HCT116 (cell line): ENCODE measurements at regions of chr12 and their contacts with region 1.

Region 1: GRCh38 chr12:55738123-55739024 is 4.5 kb upstream of the GDF11 start:
- DNase-seq: peak; percentile 82
- ATAC-seq: peak; percentile 79
- H3K4me3 ChIP-seq: peak overlapping the region; percentile 63 to 64
- H3K27ac ChIP-seq: peak overlapping the region; percentile 46
- H3K4me1 ChIP-seq: peaks cover 14 to 44% of the 10 kb centered on the region in 2 experiments
- H3K27me3 ChIP-seq: no peaks in the 10 kb centered on the region
- CTCF ChIP-seq: peak; percentile 65 to 93 (median 87)
- POLR2A ChIP-seq: peak; percentile 37
- RAD21 ChIP-seq: peak; percentile 95

Region 2: DNA sequence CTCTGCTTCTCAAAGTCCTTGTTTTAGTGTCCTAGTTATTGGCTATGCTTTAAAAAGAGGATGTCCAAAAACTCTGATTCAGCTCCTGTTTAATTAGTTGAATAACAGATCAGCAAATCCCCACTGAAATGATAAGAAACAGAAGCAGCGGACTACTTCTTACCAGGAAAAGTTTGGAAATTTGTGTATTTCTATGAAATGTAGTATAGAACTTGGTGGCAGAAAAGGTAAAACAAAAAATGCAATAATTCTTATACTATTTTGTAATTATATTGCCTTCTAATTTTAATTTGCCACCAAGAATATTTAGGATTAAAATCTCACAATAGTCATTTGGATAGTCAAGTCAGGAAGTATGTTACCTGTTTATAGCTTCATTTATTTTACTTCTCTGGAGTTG is 166.2 kb before region 1 on chr12 and contains the start of gene OR2AP1:
- CTCF ChIA-PET with region 1: no interaction called
- POLR2A ChIA-PET with region 1: no interaction called
- RAD21 ChIA-PET with region 1: no interaction called
- intact Hi-C with region 1: no loop called
- DNase-seq: no peak
- ATAC-seq: no peak
- H3K4me3 ChIP-seq: no peak within 1 kb of the TSS
- H3K27ac ChIP-seq: no peak within 1 kb of the TSS
- H3K4me1 ChIP-seq: no peaks in the 10 kb centered on the region
- H3K27me3 ChIP-seq: no peaks in the 10 kb centered on the region
- CTCF ChIP-seq: no peak
- POLR2A ChIP-seq: no peak
- RAD21 ChIP-seq: no peak
- total RNA-seq, gene OR2AP1: not detected

Region 3: GRCh38 chr12:55681142-55682077 is 57.0 kb before region 1 on chr12:
- CTCF ChIA-PET with region 1: interaction called, 13 read pairs
- POLR2A ChIA-PET with region 1: interaction called, 3 read pairs
- RAD21 ChIA-PET with region 1: interaction called, 3 to 4 read pairs
- intact Hi-C with region 1: loop called (anchors 1 kb)
- DNase-seq: peak; percentile 87
- ATAC-seq: peak; percentile 87
- H3K4me3 ChIP-seq: peak overlapping the region; percentile 77 to 78
- H3K27ac ChIP-seq: peak overlapping the region; percentile 77
- H3K4me1 ChIP-seq: peaks cover 9 to 27% of the 10 kb centered on the region in 2 experiments
- H3K27me3 ChIP-seq: no peaks in the 10 kb centered on the region
- CTCF ChIP-seq: peak; percentile 59 to 74 (median 62)
- POLR2A ChIP-seq: peak; percentile 23
- RAD21 ChIP-seq: peak; percentile 62

Region 4: DNA sequence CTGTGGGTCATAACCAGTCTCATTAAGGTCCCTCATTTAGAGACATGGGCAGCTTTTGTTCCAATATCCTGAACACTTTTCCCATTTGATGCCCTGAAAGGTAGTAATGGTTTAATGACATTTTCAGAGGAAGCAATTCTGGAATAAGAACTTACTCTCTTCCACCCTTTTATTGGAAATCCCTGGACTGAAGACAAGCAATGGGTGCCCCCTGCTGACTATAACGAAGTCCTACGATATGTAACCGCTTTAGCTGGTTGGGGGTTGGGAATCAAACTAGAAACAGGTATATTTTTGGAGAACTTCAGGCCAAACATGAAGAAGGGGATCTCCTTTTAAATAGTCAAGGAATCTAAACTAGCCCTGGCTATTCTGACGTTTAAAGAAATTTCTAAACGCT is 58.7 kb after region 1 on chr12:
- CTCF ChIA-PET with region 1: interaction called, 19 read pairs
- POLR2A ChIA-PET with region 1: no interaction called
- RAD21 ChIA-PET with region 1: interaction called in 1 of 2 experiments, 4 read pairs
- intact Hi-C with region 1: loop called (anchors 2 kb)
- DNase-seq: peak; percentile 26
- ATAC-seq: peak; percentile 76
- H3K4me3 ChIP-seq: no peak overlapping the region
- H3K27ac ChIP-seq: no peak overlapping the region
- H3K4me1 ChIP-seq: no peaks in the 10 kb centered on the region
- H3K27me3 ChIP-seq: no peaks in the 10 kb centered on the region
- CTCF ChIP-seq: peak; percentile 44 to 62 (median 51); a peak in 5 of 6 replicates
- POLR2A ChIP-seq: no peak
- RAD21 ChIP-seq: peak; percentile 60

Region 5: GRCh38 chr12:55874443-55874842 is 136.1 kb after region 1 on chr12:
- CTCF ChIA-PET with region 1: no interaction called
- POLR2A ChIA-PET with region 1: no interaction called
- RAD21 ChIA-PET with region 1: no interaction called
- intact Hi-C with region 1: no loop called
- DNase-seq: no peak
- ATAC-seq: no peak
- H3K4me3 ChIP-seq: no peak overlapping the region
- H3K27ac ChIP-seq: no peak overlapping the region
- H3K4me1 ChIP-seq: no peaks in the 10 kb centered on the region
- H3K27me3 ChIP-seq: no peaks in the 10 kb centered on the region
- CTCF ChIP-seq: no peak
- POLR2A ChIP-seq: no peak
- RAD21 ChIP-seq: no peak

Region 6: DNA sequence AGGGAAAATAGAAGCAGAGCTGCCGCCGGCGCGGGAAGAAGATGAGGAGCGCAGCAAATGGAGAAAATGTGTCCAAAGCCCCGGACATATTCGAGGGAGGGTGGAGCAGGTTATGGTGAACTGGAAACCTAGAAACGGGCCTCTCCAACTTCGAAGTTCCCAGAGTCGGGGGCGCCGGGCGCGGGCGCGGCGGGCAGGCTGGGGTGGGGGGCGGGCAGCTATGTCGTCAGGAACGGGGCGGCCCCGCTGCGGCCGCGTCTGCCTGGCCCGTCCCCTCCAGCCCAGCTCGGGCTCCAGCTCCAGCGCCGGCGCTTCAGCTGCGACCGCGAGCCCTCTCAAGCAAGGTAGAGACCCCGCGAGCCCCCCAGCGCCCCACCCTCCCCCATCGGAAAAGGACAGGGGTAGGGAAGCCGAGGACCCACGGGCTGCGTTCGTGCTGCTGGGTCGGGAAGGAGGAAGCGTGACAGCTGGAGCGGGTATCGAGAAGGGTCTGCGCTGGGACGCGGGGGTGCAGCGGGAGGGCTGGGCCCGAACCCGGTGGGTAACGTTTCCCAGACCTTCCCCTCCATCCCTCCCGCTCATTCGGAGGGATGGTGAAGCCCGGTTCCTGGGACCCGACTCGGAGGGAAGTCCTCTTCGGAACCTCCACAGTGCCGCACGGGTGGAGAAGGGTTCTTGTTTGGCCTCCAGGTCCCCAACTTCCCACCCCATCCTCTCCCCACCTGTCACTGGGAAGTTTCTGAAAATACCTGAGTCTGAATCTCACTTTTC is 193.6 kb after region 1 on chr12:
- CTCF ChIA-PET with region 1: interaction called, 10 read pairs
- POLR2A ChIA-PET with region 1: no interaction called
- RAD21 ChIA-PET with region 1: no interaction called
- intact Hi-C with region 1: loop called (anchors 1 kb)
- DNase-seq: no peak
- ATAC-seq: peak; percentile 30
- H3K4me3 ChIP-seq: peak overlapping the region; percentile 71 to 74
- H3K27ac ChIP-seq: peak overlapping the region; percentile 67
- H3K4me1 ChIP-seq: peaks cover 27 to 55% of the 10 kb centered on the region in 2 experiments
- H3K27me3 ChIP-seq: no peaks in the 10 kb centered on the region
- CTCF ChIP-seq: no peak
- POLR2A ChIP-seq: no peak
- RAD21 ChIP-seq: no peak

Region 7: DNA sequence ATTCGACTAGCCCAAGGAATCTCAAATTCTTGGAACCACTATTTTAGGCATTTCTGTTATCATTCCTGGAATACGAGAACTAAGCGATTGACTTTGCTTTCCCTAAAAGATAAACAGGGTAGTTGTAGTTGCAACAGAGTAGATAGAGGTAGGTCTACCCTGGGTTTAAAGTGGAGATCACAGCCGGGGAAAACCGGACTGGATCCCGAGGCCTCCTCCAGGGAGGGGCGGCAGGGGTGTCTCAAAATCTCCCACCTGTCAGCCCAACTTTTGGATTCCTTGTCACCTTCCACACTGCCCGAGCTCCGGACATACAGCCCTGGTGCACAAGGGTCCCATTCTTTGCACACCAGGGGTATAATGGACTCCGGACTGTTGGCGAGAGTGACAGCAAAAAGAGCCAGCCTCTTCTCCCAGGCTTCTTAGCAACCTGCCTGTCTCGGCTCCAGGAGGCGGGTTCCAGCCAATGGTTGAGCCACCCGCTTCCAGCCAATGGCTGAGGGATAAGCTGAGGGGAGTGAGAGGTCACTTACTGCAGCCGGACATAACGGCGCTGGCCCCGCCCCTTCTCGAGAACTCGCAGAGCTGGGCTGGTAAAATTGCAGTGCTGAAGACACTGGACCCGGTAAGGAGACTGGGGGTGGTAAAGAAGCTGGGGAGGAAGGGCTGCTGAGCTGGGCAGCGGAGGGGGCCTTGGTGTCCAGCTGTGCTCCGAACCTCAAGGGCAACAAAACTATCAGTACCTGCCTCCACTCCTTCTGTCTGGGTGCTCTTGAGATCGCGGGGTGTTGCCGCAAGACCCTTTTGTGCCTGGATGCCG is 258.6 kb after region 1 on chr12 and contains the start of gene SUOX:
- CTCF ChIA-PET with region 1: interaction called, 13 read pairs
- POLR2A ChIA-PET with region 1: interaction called, 3 read pairs
- RAD21 ChIA-PET with region 1: no interaction called
- intact Hi-C with region 1: no loop called
- DNase-seq: peak; percentile 93
- ATAC-seq: peak; percentile 99
- H3K4me3 ChIP-seq: peak within 1 kb of the TSS; percentile 62 to 76
- H3K27ac ChIP-seq: peak within 1 kb of the TSS; percentile 63
- H3K4me1 ChIP-seq: peaks cover 8 to 15% of the 10 kb centered on the region in 2 experiments; a peak in 3 of 4 replicates
- H3K27me3 ChIP-seq: no peaks in the 10 kb centered on the region
- CTCF ChIP-seq: no peak
- POLR2A ChIP-seq: peak; percentile 55
- RAD21 ChIP-seq: no peak
- total RNA-seq, gene SUOX: 18.0 TPM

Region 8: DNA sequence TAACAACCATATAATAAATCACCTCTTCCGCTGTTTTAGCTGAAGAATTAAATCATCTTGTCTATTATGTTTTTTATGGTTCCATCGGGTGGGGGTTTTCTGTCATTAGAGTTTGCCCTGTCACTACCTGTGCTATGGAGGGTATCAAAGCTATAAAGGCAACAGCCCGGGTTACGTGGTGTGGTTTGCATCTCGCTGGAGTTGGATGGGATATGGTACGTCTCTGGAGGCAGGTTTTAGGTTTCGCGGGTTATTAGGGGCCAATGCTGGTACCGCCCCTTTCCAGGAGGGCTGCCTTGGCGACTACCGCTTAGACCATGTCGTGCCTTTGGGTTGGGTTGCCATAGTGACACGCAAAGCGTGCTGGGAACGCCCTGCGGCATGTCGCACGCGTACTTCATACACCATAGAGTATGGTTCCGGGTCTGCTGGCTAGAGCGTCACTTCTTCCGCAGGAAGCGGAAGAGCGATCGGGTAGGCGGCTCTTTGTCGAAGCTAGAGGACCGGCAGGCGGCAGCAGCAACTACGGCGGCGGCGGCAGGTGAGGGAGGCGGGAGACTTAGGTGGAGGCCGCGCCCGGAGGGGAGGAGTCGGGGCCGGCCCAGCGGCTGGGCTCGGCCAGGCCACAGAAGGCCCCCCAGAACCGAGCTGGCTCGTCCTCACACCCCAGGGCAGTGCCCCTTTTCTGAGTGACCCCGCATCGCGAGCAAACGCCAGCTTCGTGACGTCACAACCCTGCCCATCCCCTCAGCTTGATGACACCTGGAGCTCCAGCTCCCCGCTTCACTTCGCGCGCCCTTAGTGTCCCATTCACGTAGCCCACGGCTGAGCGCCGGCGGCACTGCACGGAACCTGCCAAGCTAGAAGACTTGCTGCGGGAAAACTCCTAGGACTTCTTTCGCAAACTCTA is 379.7 kb after region 1 on chr12 and contains the start of gene ZC3H10:
- CTCF ChIA-PET with region 1: no interaction called
- POLR2A ChIA-PET with region 1: interaction called, 4 read pairs
- RAD21 ChIA-PET with region 1: no interaction called
- intact Hi-C with region 1: loop called (anchors 10 kb)
- DNase-seq: peak; percentile 99
- ATAC-seq: peak; percentile 73
- H3K4me3 ChIP-seq: peak within 1 kb of the TSS; percentile 80 to 82
- H3K27ac ChIP-seq: peak within 1 kb of the TSS; percentile 93
- H3K4me1 ChIP-seq: peaks cover 23 to 34% of the 10 kb centered on the region in 2 experiments
- H3K27me3 ChIP-seq: no peaks in the 10 kb centered on the region
- CTCF ChIP-seq: peak in 2 of 3 experiments; percentile 30 to 37; a peak in 3 of 6 replicates
- POLR2A ChIP-seq: peak; percentile 99
- RAD21 ChIP-seq: no peak
- total RNA-seq, gene ZC3H10: 8.7 TPM